Activated naive CD4-positive, alpha-beta T cell treated with anti-CD3 and anti-CD28 coated beads, Interleukin-2, amount 10 ng/mL, durations not matched to agents 7 days and 5 days (primary cell): ENCODE measurements at regions of chr12 and their contacts with region 1.

Region 1: GRCh38 chr12:30847259-30847658 is 79.3 kb upstream of the TSPAN11 start:
- DNase-seq: peak; percentile 43
- H3K4me3 Mint-ChIP-seq: no peak overlapping the region
- H3K27ac Mint-ChIP-seq: no peak overlapping the region
- H3K4me1 Mint-ChIP-seq: peaks cover 10% of the 10 kb centered on the region
- H3K27me3 Mint-ChIP-seq: no peaks in the 10 kb centered on the region

Region 2: DNA sequence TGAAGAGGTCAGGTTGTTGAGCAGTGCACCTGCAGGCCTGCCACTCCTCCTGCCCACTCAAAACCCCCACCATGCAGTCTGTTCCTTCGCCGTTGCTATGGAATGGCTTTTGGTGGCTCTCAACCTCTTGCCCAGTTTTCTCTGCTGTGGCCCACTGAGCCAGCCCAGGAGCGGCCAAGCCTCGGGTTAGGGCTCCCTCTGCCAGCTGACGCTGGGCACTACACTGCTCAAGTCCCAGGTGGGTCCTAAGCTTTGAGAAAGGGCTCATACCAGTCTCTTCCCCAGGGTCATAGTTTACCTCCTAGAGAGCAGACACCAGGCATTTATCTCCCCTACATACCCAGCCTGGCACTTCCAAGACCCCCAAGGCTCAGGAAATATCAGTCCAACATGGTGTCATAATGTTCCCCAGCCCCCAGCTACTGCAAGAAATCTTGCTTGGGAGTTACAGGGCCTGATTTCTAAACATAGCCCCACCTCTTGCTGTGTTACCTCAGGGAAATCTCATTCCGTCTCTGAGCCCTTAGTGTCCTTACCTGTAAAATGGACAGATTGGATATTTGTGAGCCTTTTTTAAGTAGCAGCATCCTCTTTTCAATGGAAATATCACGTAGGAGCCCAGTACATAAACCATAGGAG is 138.7 kb after region 1 on chr12:
- CTCF ChIA-PET with region 1: interaction called, 13 read pairs
- DNase-seq: peak; percentile 31
- H3K4me3 Mint-ChIP-seq: no peak overlapping the region
- H3K27ac Mint-ChIP-seq: no peak overlapping the region
- H3K4me1 Mint-ChIP-seq: no peaks in the 10 kb centered on the region
- H3K27me3 Mint-ChIP-seq: peaks cover 3% of the 10 kb centered on the region

Region 3: DNA sequence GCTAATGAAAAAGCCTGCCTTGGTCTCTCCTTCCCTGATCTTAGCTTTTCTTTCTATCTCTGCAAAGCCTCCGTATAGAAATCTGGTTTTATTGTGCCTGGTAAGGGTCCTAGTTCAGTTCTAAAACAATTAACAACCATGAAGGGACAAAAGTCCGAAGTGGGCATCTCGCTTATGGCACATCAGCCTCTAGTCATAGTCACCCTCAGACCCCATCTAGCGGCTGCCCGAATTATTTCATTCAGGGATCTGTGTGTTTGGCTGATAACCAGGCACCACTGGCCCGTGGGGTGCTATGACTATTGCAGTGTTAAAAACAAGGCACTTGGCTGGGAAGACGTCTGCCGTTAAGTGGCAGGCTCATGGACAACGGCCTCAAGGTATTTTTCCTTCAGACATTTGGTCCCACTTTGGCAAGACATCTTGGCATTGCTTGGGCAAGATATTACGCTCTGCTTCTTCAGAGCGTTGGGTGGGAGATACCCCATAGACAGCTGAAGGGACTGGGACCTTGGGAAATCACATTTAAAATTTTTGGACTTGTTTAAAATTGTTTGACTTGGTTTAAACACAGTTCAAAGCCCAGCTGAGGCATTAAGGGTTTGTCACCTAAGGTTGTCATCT is 391.6 kb after region 1 on chr12:
- CTCF ChIA-PET with region 1: interaction called, 32 read pairs
- DNase-seq: peak; percentile 83
- H3K4me3 Mint-ChIP-seq: no peak overlapping the region
- H3K27ac Mint-ChIP-seq: no peak overlapping the region
- H3K4me1 Mint-ChIP-seq: peaks cover 3% of the 10 kb centered on the region
- H3K27me3 Mint-ChIP-seq: peaks cover 44% of the 10 kb centered on the region